IMR-90 (cell line): ENCODE measurements at regions of chr1 and their contacts with region 1.

Region 1: DNA sequence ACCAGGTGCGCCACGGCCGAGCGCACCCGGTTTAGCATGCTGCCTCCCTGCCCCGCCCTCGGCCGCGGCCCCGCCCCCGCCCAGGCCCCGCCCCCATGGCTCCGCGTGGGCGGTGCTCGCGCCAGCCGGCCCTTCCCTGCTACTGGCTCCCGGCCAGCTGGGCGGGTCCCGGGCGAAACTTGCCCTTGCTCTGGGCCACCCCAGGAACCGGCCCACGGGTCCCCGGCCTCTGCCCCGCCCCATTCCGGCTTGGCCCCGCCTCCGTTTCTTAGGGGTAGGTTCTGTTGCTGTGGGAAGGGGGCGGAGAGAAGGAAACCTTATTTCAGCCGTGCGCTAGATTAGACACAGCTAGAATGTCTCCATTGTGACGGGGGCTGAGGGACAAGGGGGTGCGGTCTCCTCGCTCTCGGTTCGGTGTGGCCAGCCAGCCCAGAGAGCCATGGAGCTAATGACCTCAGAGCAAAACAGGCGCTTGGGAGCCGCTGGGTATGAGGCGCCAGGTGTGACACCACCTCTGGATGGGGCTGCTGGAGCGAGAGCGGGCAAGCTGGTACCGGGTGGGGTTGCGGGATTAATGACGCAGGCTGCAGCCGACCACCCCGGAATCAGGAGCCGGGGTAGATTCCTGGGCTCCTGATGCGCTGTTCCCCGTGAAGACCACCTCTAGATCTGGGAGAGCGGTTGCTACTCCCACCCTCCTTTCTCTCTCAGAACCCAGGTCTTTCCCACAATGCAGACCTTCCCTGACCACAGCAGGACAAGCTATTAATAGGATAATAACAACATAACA is at the start of gene PPM1J:
- DNase-seq: peak; percentile 83
- ATAC-seq: peak; percentile 79
- H3K4me3 ChIP-seq: peak within 1 kb of the TSS; percentile 68
- H3K27ac ChIP-seq: no peak within 1 kb of the TSS
- H3K4me1 ChIP-seq: no peaks in the 10 kb centered on the region
- H3K27me3 ChIP-seq: peaks cover 7% of the 10 kb centered on the region; the same call in 1 of the 2 replicates
- CTCF ChIP-seq: no peak
- POLR2A ChIP-seq: no peak
- RAD21 ChIP-seq: no peak
- total RNA-seq, gene PPM1J: 1.4 and 1.8 TPM in 2 replicates

Region 2: DNA sequence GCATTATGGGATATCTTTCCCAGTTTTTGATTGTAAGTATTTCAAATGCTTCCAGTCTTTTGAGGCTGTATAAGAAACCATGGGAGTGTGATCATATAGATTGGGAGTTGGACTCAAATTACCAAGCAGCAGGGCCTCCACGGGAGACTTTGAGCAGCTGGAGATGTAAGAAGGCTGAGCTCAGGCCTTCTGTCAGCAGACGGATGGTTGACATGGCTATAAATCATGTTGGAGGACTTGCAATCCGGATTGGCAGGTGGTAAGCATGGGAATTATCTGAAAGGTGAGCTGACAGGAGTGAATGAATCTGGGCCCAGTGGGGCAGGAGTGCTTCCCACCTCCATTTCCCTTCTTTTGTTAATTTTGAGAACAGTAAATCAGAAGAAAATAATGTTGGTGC is 82.8 kb after region 1 on chr1:
- CTCF ChIA-PET with region 1: interaction called, 32 read pairs
- POLR2A ChIA-PET with region 1: no interaction called
- dilution Hi-C with region 1: no loop called
- in situ Hi-C with region 1: no loop called
- intact Hi-C with region 1: no loop called
- DNase-seq: no peak
- ATAC-seq: no peak
- H3K4me3 ChIP-seq: no peak overlapping the region
- H3K27ac ChIP-seq: no peak overlapping the region
- H3K4me1 ChIP-seq: no peaks in the 10 kb centered on the region
- H3K27me3 ChIP-seq: peaks cover 3% of the 10 kb centered on the region; the same call in 1 of the 2 replicates
- CTCF ChIP-seq: no peak
- POLR2A ChIP-seq: no peak
- RAD21 ChIP-seq: no peak

Region 3: DNA sequence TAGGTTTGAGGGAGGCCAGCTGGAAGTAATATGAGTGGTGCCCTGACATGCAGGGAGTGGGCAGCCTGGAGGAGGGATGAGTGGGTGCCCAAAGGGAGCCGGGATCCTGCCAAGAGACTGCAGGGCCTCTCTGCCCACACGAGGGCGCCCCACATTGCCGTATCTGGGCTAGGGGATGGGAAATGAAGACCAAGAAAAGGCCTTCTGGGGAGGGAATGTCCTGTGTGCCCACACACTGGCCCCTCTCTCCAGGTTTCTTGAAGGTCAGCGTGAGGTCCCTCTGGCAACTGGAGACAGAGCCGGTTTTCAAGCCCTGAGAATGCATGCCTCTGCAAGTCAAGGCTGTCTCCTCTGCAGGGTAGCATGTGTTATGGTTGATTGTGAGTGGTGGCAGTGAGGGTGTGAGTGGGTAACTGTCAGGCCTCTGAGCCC is 93.8 kb after region 1 on chr1:
- CTCF ChIA-PET with region 1: interaction called, 32 read pairs
- POLR2A ChIA-PET with region 1: no interaction called
- dilution Hi-C with region 1: no loop called
- in situ Hi-C with region 1: loop called (anchors 5 kb)
- intact Hi-C with region 1: loop called (anchors 1 kb)
- DNase-seq: peak; percentile 57
- ATAC-seq: peak; percentile 98
- H3K4me3 ChIP-seq: no peak overlapping the region
- H3K27ac ChIP-seq: no peak overlapping the region
- H3K4me1 ChIP-seq: no peaks in the 10 kb centered on the region
- H3K27me3 ChIP-seq: peaks cover 9% of the 10 kb centered on the region
- CTCF ChIP-seq: peak; percentile 87
- POLR2A ChIP-seq: no peak
- RAD21 ChIP-seq: peak; percentile 89

Region 4: GRCh38 chr1:112955781-112956543 is 240.5 kb after region 1 on chr1 and contains the start of gene SLC16A1:
- CTCF ChIA-PET with region 1: no interaction called
- POLR2A ChIA-PET with region 1: no interaction called
- dilution Hi-C with region 1: no loop called
- in situ Hi-C with region 1: loop called (anchors 10 kb)
- intact Hi-C with region 1: loop called (anchors 10 kb)
- DNase-seq: peak; percentile 91
- ATAC-seq: peak; percentile 88
- H3K4me3 ChIP-seq: peak within 1 kb of the TSS; percentile 80
- H3K27ac ChIP-seq: peak within 1 kb of the TSS; percentile 90
- H3K4me1 ChIP-seq: no peaks in the 10 kb centered on the region
- H3K27me3 ChIP-seq: no peaks in the 10 kb centered on the region
- CTCF ChIP-seq: peak; percentile 38
- POLR2A ChIP-seq: peak; percentile 98
- RAD21 ChIP-seq: peak; percentile 32
- total RNA-seq, gene SLC16A1: 156 and 187 TPM in 2 replicates

Region 5: GRCh38 chr1:113072757-113073478 is 357.5 kb after region 1 on chr1 and contains the start of gene LRIG2:
- CTCF ChIA-PET with region 1: interaction called, 13 read pairs
- POLR2A ChIA-PET with region 1: no interaction called
- dilution Hi-C with region 1: no loop called
- in situ Hi-C with region 1: no loop called
- intact Hi-C with region 1: loop called (anchors 2 kb)
- DNase-seq: peak; percentile 97
- ATAC-seq: peak; percentile 98
- H3K4me3 ChIP-seq: peak within 1 kb of the TSS; percentile 85
- H3K27ac ChIP-seq: peak within 1 kb of the TSS; percentile 97
- H3K4me1 ChIP-seq: no peaks in the 10 kb centered on the region; the same call in 1 of the 2 replicates
- H3K27me3 ChIP-seq: no peaks in the 10 kb centered on the region
- CTCF ChIP-seq: peak; percentile 58
- POLR2A ChIP-seq: peak; percentile 60
- RAD21 ChIP-seq: peak; percentile 48; the same call in 1 of the 2 replicates
- total RNA-seq, gene LRIG2: 9.0 and 10.6 TPM in 2 replicates